Ovary (tissue), 10 donors: ENCODE measurements at regions of chr18 and their contacts with region 1.

Region 1: DNA sequence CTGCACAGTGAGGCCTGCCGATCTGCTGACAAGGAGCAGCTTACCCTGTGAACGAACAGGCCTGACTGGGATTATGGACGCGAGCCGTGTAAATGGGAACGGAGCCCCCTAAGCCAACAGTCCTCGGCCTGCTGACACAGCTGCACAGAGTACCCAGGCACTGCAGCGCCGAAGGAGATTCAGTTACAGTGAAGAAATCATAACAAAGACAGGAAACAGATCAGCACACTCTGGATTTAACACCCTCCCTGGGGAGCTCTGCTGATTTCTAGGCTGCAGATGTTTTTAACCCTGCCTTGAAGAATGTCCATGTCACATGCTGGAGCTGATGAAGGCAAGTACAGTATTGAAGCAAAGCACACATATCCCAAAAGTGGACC is 43.4 kb downstream of the COLEC12 start:
- DNase-seq: peak in 1 of 5 donors; percentile 39
- H3K4me3 ChIP-seq: no peak overlapping the region
- H3K27ac ChIP-seq: peak overlapping the region in 1 of 2 donors; percentile 23
- H3K4me1 ChIP-seq: no peaks in the 10 kb centered on the region
- H3K27me3 ChIP-seq: no peaks in the 10 kb centered on the region
- CTCF ChIP-seq: no peak
- EP300 ChIP-seq: no peak
- POLR2A ChIP-seq: no peak

Region 2: GRCh38 chr18:519019-519879 is 62.1 kb after region 1 on chr18:
- intact Hi-C with region 1: loop called in 1 of 4 experiments (anchors 10 kb)
- DNase-seq: peak; percentile 30 to 52 (median 38)
- H3K4me3 ChIP-seq: no peak overlapping the region
- H3K27ac ChIP-seq: no peak overlapping the region
- H3K4me1 ChIP-seq: no peaks in the 10 kb centered on the region
- H3K27me3 ChIP-seq: no peaks in the 10 kb centered on the region
- CTCF ChIP-seq: no peak
- EP300 ChIP-seq: no peak
- POLR2A ChIP-seq: no peak

Region 3: GRCh38 chr18:532018-532417 is 74.9 kb after region 1 on chr18:
- intact Hi-C with region 1: no loop called
- DNase-seq: no peak
- H3K4me3 ChIP-seq: no peak overlapping the region
- H3K27ac ChIP-seq: no peak overlapping the region
- H3K4me1 ChIP-seq: no peaks in the 10 kb centered on the region
- H3K27me3 ChIP-seq: no peaks in the 10 kb centered on the region
- CTCF ChIP-seq: no peak
- EP300 ChIP-seq: no peak
- POLR2A ChIP-seq: no peak